Ascending aorta (tissue), 2 donors: ENCODE measurements at regions of chr16 and their contacts with region 1.

Region 1: DNA sequence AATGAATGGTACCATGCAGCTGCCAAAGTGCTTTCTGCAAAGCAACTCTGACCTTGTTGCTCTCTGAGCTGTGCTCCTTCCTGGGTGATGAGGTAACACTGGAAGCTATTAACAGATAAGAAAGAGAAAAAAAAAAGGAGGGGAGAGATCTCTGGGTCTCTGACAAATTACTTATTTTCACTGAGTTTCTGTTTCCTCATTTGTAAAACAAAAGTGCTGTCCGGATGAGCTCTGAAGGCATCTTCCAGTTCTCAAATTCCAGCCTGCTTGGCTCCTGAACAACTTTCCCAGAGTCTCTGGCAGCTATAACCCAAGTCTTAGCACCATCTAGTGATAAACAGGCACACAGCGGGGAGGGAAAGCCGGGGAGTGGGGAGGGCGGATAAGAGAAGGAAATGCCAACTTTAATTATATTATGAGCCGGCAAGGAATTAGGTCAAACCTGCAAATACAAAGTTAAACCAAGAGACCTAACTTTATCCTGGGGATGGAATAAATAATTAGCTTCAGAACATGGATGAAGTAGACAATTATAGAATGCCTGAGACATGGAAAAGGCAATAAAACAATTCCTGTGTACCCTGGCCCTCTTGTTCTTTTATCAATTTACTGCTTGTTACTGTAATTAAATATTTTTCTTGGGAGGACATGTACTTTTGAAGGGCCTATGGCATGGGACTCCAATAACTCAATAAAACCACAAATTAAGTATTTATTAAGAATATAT is 61.3 kb upstream of the KIFC3 start:
- DNase-seq: peak in 1 of 2 donors; percentile 81
- H3K4me3 ChIP-seq: no peak overlapping the region
- H3K27ac ChIP-seq: no peak overlapping the region
- H3K4me1 ChIP-seq: no peaks in the 10 kb centered on the region
- H3K27me3 ChIP-seq: no peaks in the 10 kb centered on the region
- CTCF ChIP-seq: peak; percentile 40 to 77 (median 57)

Region 2: DNA sequence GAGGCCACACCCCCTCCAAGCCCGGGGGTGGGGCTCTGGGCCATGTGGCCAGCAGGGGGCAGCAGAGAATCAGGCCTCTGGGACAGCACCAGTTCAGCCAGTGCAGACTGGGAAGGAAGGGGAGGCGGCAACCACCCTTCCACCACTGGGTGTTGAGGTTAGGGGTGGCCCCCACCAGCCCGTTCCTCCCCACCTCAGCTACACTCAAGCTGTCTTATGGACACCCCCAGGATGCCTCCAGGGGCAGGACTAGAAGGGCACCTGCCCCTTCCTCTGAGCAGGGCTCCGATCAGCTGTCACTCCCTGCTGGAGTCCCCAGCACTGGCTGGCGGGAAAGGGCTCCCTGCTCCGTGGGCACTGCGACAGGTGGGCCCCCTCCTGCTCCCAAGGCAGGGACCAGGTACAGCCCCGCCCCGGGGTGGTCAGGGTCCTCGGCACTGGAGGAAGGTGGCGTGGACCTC is 106.2 kb before region 1 on chr16:
- intact Hi-C with region 1: loop called (anchors 1 kb)
- DNase-seq: peak; percentile 46 to 93
- H3K4me3 ChIP-seq: no peak overlapping the region
- H3K27ac ChIP-seq: no peak overlapping the region
- H3K4me1 ChIP-seq: no peaks in the 10 kb centered on the region
- H3K27me3 ChIP-seq: no peaks in the 10 kb centered on the region
- CTCF ChIP-seq: peak; percentile 92 to 98 (median 92)